ENCODE measurements at regions of chr12 and their contacts with region 1.

Region 1: DNA sequence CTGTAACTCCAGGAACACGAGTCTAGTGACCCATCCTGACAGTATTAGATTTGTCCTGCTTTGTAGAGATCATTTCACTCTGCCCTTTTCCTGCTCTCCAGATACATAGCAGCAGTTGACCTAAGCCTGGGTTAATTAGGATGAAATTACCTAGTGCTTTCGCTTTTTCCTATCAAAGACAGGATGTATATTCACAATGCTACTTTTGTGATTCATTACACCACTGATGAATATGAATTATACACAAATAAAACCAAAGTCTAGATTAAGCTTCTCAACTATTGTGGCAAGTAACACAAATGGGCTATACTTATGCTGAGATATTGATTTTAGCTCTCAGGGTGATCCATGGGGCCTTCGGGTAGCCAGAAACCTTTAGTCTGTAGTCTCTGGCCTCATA is 17.9 kb downstream of the CERS5 start:
- DNase-seq: no peak
- H3K4me3 ChIP-seq: no peak overlapping the region
- H3K27ac ChIP-seq: no peak overlapping the region
- H3K4me1 ChIP-seq: no peaks in the 10 kb centered on the region
- H3K27me3 ChIP-seq: no peaks in the 10 kb centered on the region
- CTCF ChIP-seq: no peak
- EP300 ChIP-seq: no peak
- POLR2A ChIP-seq: no peak
- RAD21 ChIP-seq: no peak

Region 2: GRCh38 chr12:50055831-50056638 is 93.3 kb before region 1 on chr12:
- CTCF ChIA-PET with region 1: no interaction called
- POLR2A ChIA-PET with region 1: no interaction called
- DNase-seq: peak in 1 of 2 experiments; percentile 82
- H3K4me3 ChIP-seq: peak overlapping the region in 2 of 4 experiments; percentile 17 to 74; a peak in 5 of 8 replicates
- H3K27ac ChIP-seq: no peak overlapping the region
- H3K4me1 ChIP-seq: peaks cover 3 to 16% (median 10%) of the 10 kb centered on the region in 4 experiments
- H3K27me3 ChIP-seq: peaks cover 35 to 91% (median 73%) of the 10 kb centered on the region in 4 experiments
- CTCF ChIP-seq: peak; percentile 90 to 96 (median 91)
- EP300 ChIP-seq: no peak
- POLR2A ChIP-seq: no peak
- RAD21 ChIP-seq: peak; percentile 89 to 92

Region 3: DNA sequence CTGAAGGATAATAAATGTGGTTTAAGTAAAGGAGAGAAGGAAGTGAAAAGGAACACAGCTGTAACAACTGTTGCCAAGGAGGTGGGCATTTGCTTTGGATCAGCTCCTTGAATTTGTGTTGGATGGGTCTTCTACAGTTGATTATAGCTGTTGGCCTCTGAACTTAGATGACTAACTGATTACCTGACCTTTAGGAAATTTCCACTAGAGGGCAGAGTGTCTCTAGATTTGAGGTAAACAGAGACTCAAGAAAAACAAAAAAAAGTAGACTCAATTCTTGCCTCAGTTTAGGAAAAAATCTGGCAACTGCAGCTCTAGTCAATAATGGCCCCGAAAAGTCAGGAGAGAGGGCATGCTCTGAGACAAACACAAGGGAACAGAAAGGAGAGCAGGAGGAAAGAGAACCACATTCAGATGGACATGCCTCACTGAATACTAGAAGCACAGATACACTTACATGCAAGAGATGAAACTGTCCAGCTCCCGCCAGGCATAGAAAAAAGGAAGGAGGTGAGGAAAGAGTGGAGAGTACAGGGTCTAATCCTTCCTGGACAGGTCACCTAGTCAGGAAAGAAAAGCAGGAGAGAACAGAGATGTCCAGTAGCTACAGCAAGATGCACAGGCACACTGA is 16.7 kb before region 1 on chr12:
- CTCF ChIA-PET with region 1: interaction called, 18 read pairs
- POLR2A ChIA-PET with region 1: interaction called, 6 read pairs
- DNase-seq: no peak
- H3K4me3 ChIP-seq: no peak overlapping the region
- H3K27ac ChIP-seq: no peak overlapping the region
- H3K4me1 ChIP-seq: no peaks in the 10 kb centered on the region
- H3K27me3 ChIP-seq: no peaks in the 10 kb centered on the region
- CTCF ChIP-seq: peak in 2 of 3 experiments; percentile 33 to 38; a peak in 2 of 4 replicates
- EP300 ChIP-seq: no peak
- POLR2A ChIP-seq: no peak
- RAD21 ChIP-seq: peak; percentile 49 to 56; a peak in 3 of 4 replicates

Region 4: GRCh38 chr12:50162230-50162629 is 12.9 kb after region 1 on chr12:
- CTCF ChIA-PET with region 1: interaction called, 28 read pairs
- POLR2A ChIA-PET with region 1: interaction called, 20 read pairs
- DNase-seq: no peak
- H3K4me3 ChIP-seq: no peak overlapping the region
- H3K27ac ChIP-seq: no peak overlapping the region
- H3K4me1 ChIP-seq: no peaks in the 10 kb centered on the region
- H3K27me3 ChIP-seq: no peaks in the 10 kb centered on the region
- CTCF ChIP-seq: no peak
- EP300 ChIP-seq: no peak
- POLR2A ChIP-seq: no peak
- RAD21 ChIP-seq: no peak

Measured in H1 (cell line).